Heart left ventricle (tissue), 16 donors: ENCODE measurements at regions of chr18 and their contacts with region 1.

Region 1: GRCh38 chr18:21117409-21118131 is 6.0 kb upstream of the ROCK1 start:
- DNase-seq: no peak
- ATAC-seq: peak; percentile 77 to 88 (median 84)
- H3K4me3 ChIP-seq: peak overlapping the region in 1 of 12 donors; percentile 18
- H3K27ac ChIP-seq: peak overlapping the region in 11 of 12 donors; percentile 9 to 77 (median 37)
- H3K4me1 ChIP-seq: peaks cover 0 to 35% (median 3%) of the 10 kb centered on the region in 12 donors
- H3K27me3 ChIP-seq: no peaks in the 10 kb centered on the region
- CTCF ChIP-seq: no peak
- POLR2A ChIP-seq: no peak

Region 2: DNA sequence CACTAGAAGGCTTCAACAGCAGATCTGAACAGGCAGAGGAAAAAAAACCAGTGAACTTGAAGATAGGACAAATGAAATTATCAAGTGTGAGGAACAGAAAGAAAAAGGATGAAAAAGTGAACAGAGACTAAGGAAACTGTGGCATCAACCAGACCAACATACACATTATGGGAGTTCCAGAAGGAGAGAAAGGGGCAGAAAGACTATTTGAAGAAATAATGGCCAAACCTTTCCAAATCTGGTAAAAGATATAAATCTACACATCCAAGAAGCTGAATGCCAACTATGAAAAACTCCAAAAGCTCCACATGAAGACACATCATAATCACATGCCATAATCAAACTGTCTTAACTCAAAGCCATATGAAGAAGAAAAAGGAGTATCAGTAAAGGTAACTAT is 85.7 kb before region 1 on chr18:
- intact Hi-C with region 1: no loop called
- DNase-seq: no peak
- ATAC-seq: no peak
- H3K4me3 ChIP-seq: no peak overlapping the region
- H3K27ac ChIP-seq: no peak overlapping the region
- H3K4me1 ChIP-seq: no peaks in the 10 kb centered on the region
- H3K27me3 ChIP-seq: no peaks in the 10 kb centered on the region
- CTCF ChIP-seq: no peak
- POLR2A ChIP-seq: no peak

Region 3: GRCh38 chr18:21163647-21164547 is 46.3 kb after region 1 on chr18:
- intact Hi-C with region 1: loop called in 1 of 10 experiments (anchors 5 kb)
- DNase-seq: no peak
- ATAC-seq: peak; percentile 51 to 80 (median 78)
- H3K4me3 ChIP-seq: no peak overlapping the region
- H3K27ac ChIP-seq: peak overlapping the region in 3 of 12 donors; percentile 22 to 84 (median 25)
- H3K4me1 ChIP-seq: peaks cover 0 to 24% (median 0%) of the 10 kb centered on the region in 12 donors
- H3K27me3 ChIP-seq: no peaks in the 10 kb centered on the region
- CTCF ChIP-seq: no peak
- POLR2A ChIP-seq: no peak

Region 4: DNA sequence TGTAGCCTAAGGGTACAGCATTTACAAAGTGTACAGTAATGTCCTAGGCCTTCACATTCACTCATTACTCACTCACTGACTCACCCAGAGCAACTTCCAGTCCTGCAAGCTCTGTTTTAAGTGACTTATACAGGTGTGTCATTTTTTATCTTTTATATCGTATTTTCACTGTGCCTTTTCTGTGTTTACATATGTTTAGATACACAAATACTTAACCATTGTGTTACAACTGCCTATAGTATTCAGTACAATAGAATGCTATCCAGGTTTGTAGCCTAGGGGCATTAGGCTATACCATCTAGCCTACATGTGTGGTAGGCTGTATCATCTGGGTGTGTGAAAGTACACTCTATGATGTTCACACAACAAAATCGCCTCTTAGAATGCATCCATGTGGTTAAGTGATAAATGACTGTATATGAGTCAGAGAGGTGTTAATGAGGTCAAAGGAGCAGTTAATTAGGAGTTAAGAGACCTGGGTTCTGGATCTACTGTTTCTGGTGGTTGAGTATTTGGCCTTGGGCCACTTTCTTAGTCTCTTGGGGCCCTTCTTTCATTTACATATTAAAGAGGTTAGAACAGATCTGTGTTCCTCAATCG is 273.6 kb after region 1 on chr18:
- intact Hi-C with region 1: no loop called
- DNase-seq: no peak
- ATAC-seq: no peak
- H3K4me3 ChIP-seq: no peak overlapping the region
- H3K27ac ChIP-seq: no peak overlapping the region
- H3K4me1 ChIP-seq: peaks cover 0 to 7% (median 0%) of the 10 kb centered on the region in 12 donors
- H3K27me3 ChIP-seq: no peaks in the 10 kb centered on the region
- CTCF ChIP-seq: no peak
- POLR2A ChIP-seq: no peak